ENCODE measurements at regions of chr14 and their contacts with region 1.

Region 1: GRCh38 chr14:71555654-71556559 is 376.3 kb upstream of the RGS6 start:
- DNase-seq: peak; percentile 43 to 88
- ATAC-seq: peak; percentile 75 to 86 (median 83)
- H3K4me3 ChIP-seq: no peak overlapping the region
- H3K4me3 Mint-ChIP-seq: peak overlapping the region; percentile 93
- H3K27ac ChIP-seq: peak overlapping the region; percentile 90
- H3K27ac Mint-ChIP-seq: peak overlapping the region; percentile 96 to 100
- H3K4me1 ChIP-seq: peaks cover 9% of the 10 kb centered on the region
- H3K4me1 Mint-ChIP-seq: peaks cover 34 to 42% of the 10 kb centered on the region in 2 donors
- H3K27me3 ChIP-seq: no peaks in the 10 kb centered on the region
- H3K27me3 Mint-ChIP-seq: no peaks in the 10 kb centered on the region
- CTCF ChIP-seq: no peak

Region 2: GRCh38 chr14:71395151-71395604 is 160.7 kb before region 1 on chr14:
- intact Hi-C with region 1: loop called (anchors 2 kb)
- DNase-seq: peak in 1 of 2 donors; percentile 21
- ATAC-seq: peak; percentile 74 to 79 (median 75)
- H3K4me3 ChIP-seq: no peak overlapping the region
- H3K4me3 Mint-ChIP-seq: no peak overlapping the region
- H3K27ac ChIP-seq: peak overlapping the region; percentile 23
- H3K27ac Mint-ChIP-seq: peak overlapping the region; percentile 78 to 84
- H3K4me1 ChIP-seq: peaks cover 22% of the 10 kb centered on the region
- H3K4me1 Mint-ChIP-seq: peaks cover 32 to 39% of the 10 kb centered on the region in 2 donors
- H3K27me3 ChIP-seq: no peaks in the 10 kb centered on the region
- H3K27me3 Mint-ChIP-seq: no peaks in the 10 kb centered on the region
- CTCF ChIP-seq: no peak

Region 3: DNA sequence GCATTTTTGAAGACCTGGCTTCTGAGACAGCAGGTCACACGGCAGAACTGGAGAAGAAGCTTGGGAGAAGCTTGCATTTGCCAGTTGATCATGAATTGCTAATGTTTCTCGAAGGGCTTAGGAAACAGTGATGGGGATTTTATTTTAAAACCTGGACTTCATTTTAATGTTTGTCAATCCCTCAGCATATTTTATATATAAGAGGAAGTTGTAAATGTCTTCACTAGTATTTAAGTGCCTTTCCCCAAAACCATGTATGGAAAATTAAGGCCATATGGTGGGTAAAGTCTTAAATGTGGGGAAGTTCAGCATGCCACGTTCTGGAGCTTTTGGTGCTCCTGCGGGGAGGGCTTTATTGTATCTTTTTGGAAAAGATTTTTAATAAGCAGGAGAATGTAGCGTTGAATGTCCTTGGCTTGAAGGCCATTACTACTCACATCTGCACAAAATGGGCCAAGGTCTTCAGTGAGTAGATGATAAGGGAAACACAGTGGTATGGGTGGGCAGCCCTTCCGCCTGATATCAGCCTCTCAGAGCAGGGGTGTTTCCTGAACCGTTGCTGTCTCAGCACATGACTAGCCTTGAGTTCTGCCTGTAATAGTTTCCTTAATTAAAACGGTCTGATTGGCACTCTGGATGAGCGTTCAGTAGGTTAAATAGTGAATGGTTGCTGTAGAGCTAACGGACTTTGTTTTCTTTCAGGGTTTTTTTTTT is 137.2 kb before region 1 on chr14:
- intact Hi-C with region 1: no loop called
- DNase-seq: no peak
- ATAC-seq: no peak
- H3K4me3 ChIP-seq: no peak overlapping the region
- H3K4me3 Mint-ChIP-seq: no peak overlapping the region
- H3K27ac ChIP-seq: no peak overlapping the region
- H3K27ac Mint-ChIP-seq: no peak overlapping the region
- H3K4me1 ChIP-seq: no peaks in the 10 kb centered on the region
- H3K4me1 Mint-ChIP-seq: peaks cover 0 to 10% of the 10 kb centered on the region in 2 donors
- H3K27me3 ChIP-seq: no peaks in the 10 kb centered on the region
- H3K27me3 Mint-ChIP-seq: no peaks in the 10 kb centered on the region
- CTCF ChIP-seq: no peak

Region 4: GRCh38 chr14:71497645-71498086 is 58.2 kb before region 1 on chr14:
- intact Hi-C with region 1: no loop called
- DNase-seq: no peak
- ATAC-seq: no peak
- H3K4me3 ChIP-seq: no peak overlapping the region
- H3K4me3 Mint-ChIP-seq: no peak overlapping the region
- H3K27ac ChIP-seq: no peak overlapping the region
- H3K27ac Mint-ChIP-seq: no peak overlapping the region
- H3K4me1 ChIP-seq: no peaks in the 10 kb centered on the region
- H3K4me1 Mint-ChIP-seq: peaks cover 7 to 13% of the 10 kb centered on the region in 2 donors
- H3K27me3 ChIP-seq: no peaks in the 10 kb centered on the region
- H3K27me3 Mint-ChIP-seq: no peaks in the 10 kb centered on the region
- CTCF ChIP-seq: no peak

Region 5: GRCh38 chr14:71698027-71698426 is 142.1 kb after region 1 on chr14:
- intact Hi-C with region 1: loop called (anchors 1 kb)
- DNase-seq: peak in 1 of 2 donors; percentile 16
- ATAC-seq: peak; percentile 91 to 99 (median 97)
- H3K4me3 ChIP-seq: no peak overlapping the region
- H3K4me3 Mint-ChIP-seq: no peak overlapping the region
- H3K27ac ChIP-seq: peak overlapping the region; percentile 14
- H3K27ac Mint-ChIP-seq: peak overlapping the region; percentile 53 to 72
- H3K4me1 ChIP-seq: no peaks in the 10 kb centered on the region
- H3K4me1 Mint-ChIP-seq: peaks cover 11 to 19% of the 10 kb centered on the region in 2 donors
- H3K27me3 ChIP-seq: no peaks in the 10 kb centered on the region
- H3K27me3 Mint-ChIP-seq: no peaks in the 10 kb centered on the region
- CTCF ChIP-seq: no peak